ENCODE measurements at regions of chr11 and their contacts with region 1.

Region 1: DNA sequence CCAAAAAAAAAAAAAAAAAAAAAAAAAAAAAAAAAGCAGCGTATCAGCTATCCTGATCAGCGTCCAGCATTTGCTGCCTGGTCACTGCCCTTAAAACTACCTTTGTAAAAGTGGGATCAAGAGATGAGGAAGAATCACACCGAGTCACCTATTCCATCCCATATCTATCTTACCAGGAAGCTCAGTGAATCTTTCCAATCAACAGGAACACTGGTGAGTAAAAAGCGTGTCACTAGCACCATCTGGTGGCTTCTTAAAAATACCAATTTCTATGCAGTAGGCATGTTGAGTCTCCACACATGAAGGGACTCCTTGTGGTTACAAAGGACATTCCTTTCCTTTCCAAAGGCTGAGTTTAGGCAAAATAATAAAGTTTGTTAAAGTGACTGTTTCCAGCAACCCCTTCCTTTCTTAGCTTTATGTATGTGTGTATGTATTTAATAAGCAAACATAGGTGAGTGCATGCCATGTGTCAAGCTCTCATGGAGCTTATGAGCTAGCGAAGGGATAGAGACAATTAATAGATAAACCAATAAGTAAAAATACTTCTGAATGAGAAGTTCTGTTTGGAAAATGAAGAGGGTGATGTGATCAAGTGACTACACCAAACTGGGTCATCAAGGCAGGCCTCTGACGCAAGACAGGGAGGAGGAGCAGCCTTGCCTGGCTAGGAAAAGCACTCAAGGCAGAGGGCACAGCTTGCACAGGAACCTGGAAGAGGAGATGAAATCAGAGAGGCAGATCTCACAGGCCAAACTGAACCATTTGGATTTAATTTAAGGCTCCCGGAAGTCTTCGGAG is 13.9 kb upstream of the TP53AIP1 start:
- DNase-seq: peak; percentile 73

Region 2: DNA sequence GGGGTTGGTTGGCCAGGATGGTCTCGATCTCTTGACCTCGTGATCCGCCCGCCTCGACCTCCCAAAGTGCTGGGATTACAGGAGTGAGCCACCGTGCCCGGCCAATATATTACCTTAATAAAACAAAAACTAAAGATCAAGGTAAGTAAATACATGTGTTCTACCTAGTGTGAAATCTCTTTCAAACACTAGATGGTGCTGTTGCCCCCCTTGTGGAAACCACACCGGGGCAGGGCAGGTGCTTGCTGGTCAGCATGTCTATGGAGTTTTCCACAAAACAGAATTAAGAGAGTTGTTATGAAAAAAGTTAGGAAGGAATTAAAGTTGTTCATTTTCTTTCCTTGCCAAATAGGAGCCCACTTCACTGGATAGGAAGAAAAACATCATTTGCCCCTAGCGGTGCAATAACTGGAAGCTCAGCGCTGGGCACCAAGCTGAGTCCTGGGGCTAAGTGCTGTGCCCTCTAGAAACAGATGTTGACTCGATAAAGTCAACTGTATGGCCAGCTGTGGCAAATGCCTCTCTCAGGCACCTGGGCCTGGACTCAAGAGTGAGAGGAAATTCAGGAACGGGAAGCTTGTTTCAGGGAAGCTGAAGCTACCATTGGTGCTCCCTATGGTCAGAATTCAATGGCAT is 71.8 kb before region 1 on chr11:
- CTCF ChIA-PET with region 1: interaction called, 68 read pairs
- POLR2A ChIA-PET with region 1: interaction called, 6 read pairs
- DNase-seq: peak; percentile 60

Region 3: DNA sequence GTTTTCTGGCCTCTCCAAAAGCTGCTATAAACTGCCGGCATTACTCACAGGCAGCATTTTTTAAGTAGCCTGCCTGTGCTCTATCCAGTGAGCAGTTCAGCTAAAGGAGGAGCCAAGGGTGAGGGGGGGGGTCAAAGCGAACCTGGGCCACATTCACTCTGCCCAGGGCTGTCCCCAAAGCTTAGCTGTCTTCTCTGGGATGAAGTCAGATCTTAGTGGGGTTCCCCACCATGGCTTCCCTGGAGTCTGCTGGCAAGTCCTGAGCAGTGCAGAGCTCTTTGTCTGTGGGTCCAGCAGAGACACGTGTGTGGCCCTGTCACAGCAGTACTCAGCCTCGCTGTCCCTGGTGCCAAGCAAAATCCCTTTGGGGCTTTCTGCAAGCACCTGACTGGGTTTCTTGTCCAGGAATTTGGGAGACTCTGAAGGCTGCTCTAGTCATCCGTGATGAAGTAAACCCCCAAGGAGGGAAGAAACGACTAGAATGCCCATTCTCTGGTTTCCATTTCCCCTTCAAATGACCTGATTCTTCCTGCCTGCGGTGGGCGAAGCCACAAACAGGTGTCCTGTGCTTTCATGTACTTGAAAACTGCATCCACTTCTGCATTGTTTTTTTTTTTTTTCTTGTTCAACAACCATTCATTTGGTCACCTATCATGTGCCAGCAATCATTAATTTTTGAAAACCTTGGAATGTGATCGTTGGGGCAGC is 62.9 kb before region 1 on chr11:
- CTCF ChIA-PET with region 1: interaction called, 14 read pairs
- POLR2A ChIA-PET with region 1: no interaction called
- DNase-seq: no peak

Region 4: DNA sequence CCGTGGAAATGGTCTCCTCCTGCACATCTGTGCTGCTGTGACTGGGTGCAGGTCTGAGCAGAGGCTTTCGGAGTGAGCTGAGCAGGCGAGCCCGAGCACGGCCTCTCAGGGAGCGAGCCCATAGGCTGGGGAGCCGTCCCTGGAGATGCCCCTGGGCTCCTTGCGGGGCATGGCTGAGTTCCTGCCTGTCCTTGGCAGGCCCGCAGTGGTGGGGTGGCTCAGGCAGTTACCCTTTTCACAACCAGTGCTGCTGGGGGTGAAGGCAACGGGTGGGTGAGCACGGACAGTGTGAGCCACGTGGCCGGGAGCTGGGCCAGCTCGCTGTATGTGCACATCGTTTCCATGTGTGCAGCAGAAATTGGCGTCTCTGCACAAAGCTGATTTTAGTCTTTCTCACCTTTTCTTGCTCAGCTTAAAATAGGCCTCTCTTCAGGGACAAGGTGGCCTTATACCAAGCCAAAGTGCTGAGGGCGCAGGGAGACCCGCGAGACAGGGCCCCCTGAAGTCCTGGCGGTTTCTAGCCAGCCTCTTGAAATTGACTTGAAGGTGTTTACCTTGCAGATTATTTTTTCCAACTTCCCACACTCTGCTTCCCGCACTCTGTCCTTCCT is 13.7 kb before region 1 on chr11 and contains the start of gene TP53AIP1:
- CTCF ChIA-PET with region 1: interaction called, 10 read pairs
- POLR2A ChIA-PET with region 1: no interaction called
- DNase-seq: no peak

Region 5: DNA sequence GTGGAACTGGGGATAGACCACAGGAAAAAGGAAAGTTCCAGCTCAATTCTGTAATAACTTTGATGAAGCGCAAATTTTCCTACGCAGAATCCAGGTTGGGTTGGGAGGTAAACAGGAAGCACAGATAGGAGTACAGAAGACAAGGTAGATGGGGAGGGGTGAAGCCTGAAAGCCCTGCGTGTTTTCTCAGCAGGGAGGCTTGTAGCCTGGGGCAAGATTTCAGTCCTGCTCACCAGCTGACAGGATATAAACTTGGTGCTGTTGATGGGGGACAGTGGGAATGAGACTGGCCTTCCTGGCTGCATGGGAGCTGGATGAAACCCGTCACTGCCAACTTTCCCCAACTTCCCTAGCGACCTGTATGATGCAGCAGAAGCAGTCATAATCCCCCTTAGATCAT is 120.6 kb after region 1 on chr11:
- CTCF ChIA-PET with region 1: no interaction called
- POLR2A ChIA-PET with region 1: no interaction called
- DNase-seq: no peak